ENCODE measurements at regions of chr22 and their contacts with region 1.

Region 1: DNA sequence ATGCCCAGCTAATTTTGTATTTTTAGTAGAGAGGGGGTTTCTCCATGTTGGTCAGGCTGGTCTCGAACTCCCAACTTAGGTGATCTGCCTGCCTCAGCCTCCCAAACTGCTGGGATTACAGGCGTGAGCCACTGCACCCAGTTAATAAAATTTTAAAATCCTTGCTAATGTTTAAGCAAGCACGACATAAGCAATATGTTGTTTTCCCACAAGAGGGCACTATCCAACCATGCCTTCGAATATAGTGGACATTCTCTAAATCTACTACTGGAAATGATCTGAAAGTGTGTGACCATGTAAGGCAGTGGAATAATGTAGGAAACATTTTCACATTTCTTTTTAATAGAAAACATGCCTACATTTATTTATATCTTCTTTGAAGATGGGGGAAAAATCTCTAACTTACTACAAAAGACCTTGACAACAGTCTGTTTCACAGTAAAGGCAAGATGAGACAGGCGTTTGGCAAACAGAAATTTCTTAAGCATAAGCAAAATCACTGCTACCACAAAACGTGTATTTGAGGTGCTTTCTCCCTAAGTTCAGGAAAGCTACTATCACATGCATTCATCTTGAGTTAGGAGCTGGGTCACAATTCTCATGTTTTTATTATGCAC is 38.2 kb downstream of the PITPNB start:
- DNase-seq: peak; percentile 53
- H3K4me3 ChIP-seq: no peak overlapping the region
- CTCF ChIP-seq: peak; percentile 51

Region 2: GRCh38 chr22:27597703-27598444 is 283.0 kb before region 1 on chr22:
- CTCF ChIA-PET with region 1: no interaction called
- POLR2A ChIA-PET with region 1: no interaction called
- DNase-seq: no peak
- H3K4me3 ChIP-seq: no peak overlapping the region
- CTCF ChIP-seq: no peak

Region 3: GRCh38 chr22:27859228-27859681 is 21.6 kb before region 1 on chr22:
- CTCF ChIA-PET with region 1: interaction called, 30 read pairs
- POLR2A ChIA-PET with region 1: no interaction called
- DNase-seq: no peak
- H3K4me3 ChIP-seq: peak overlapping the region; percentile 35
- CTCF ChIP-seq: no peak

Region 4: GRCh38 chr22:27895600-27895999 is 14.7 kb after region 1 on chr22:
- CTCF ChIA-PET with region 1: interaction called, 136 read pairs
- POLR2A ChIA-PET with region 1: no interaction called
- DNase-seq: no peak
- H3K4me3 ChIP-seq: no peak overlapping the region
- CTCF ChIP-seq: no peak

Region 5: DNA sequence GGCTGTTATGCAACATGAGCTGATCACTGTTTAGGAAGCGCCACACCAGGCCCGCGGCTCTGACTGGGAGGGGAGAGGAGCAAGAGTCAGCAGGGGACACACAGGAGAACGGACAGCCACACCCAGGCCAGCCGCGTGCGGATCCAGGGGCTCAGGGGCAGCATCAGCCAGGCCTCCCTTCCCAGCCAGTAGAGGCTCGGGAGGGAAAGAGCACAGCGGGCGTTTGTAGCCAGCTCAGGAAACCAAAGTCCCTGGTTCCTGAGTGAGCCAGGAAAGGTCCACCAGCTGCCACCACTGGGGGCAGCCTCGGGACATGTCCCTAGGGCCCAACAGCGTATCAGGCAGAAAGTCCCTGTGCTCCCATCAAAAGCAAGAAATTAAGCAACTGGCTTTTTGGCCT is 110.0 kb after region 1 on chr22:
- CTCF ChIA-PET with region 1: interaction called, 514 read pairs
- POLR2A ChIA-PET with region 1: no interaction called
- DNase-seq: no peak
- H3K4me3 ChIP-seq: no peak overlapping the region
- CTCF ChIP-seq: peak; percentile 28

Region 6: GRCh38 chr22:28019881-28020871 is 139.3 kb after region 1 on chr22:
- CTCF ChIA-PET with region 1: interaction called, 21 read pairs
- POLR2A ChIA-PET with region 1: no interaction called
- DNase-seq: no peak
- H3K4me3 ChIP-seq: peak overlapping the region; percentile 43
- CTCF ChIP-seq: peak; percentile 92